GM12878 (cell line): ENCODE measurements at regions of chr13 and their contacts with region 1.

Region 1: DNA sequence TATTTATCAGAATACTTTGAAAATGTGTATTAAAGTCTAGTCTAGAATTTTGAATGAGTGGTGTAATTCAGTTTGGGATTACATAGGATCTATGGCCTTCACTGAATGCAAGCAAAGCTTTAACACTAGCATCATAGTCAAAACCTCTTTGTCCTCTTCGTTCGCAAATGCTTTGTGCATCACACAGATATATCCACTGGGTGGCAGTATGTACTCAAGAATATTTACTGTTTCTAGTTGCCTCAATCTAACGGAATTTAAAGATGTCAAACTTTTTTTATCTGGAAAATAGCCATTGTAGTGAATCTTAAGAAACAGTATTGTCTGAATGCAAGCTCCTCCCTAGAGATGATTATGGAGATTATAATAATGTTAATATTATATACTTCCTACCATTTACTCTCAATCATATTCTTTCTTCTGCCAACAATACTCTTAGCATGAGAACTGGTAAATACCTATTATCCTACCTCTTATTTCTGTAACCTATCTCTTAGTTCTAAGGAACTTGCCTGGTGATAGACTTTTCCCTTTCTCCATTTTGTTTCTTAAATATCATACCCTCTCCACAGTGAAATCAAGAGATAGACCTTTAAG is 25.8 kb downstream of the LACC1 start:
- DNase-seq: no peak
- ATAC-seq: peak; percentile 68
- H3K4me3 ChIP-seq: no peak overlapping the region
- H3K27ac ChIP-seq: no peak overlapping the region
- H3K4me1 ChIP-seq: no peaks in the 10 kb centered on the region
- H3K27me3 ChIP-seq: 0 out of 4 replicates have a peak, but pooled peaks cover 0 to 7% of the 10 kb centered on the region in 2 experiments
- CTCF ChIP-seq: peak; percentile 51 to 74 (median 65); a peak in 5 of 6 replicates
- EP300 ChIP-seq: no peak
- POLR2A ChIP-seq: no peak
- RAD21 ChIP-seq: peak; percentile 91

Region 2: GRCh38 chr13:43963726-43964125 is 58.2 kb after region 1 on chr13:
- CTCF ChIA-PET with region 1: no interaction called
- POLR2A ChIA-PET with region 1: no interaction called
- RAD21 ChIA-PET with region 1: no interaction called
- SMC1A ChIA-PET with region 1: interaction called, 3 read pairs
- in situ Hi-C with region 1: no loop called
- intact Hi-C with region 1: loop called (anchors 5 kb)
- DNase-seq: no peak
- ATAC-seq: no peak
- H3K4me3 ChIP-seq: no peak overlapping the region
- H3K27ac ChIP-seq: no peak overlapping the region
- H3K4me1 ChIP-seq: no peaks in the 10 kb centered on the region
- H3K27me3 ChIP-seq: no peaks in the 10 kb centered on the region
- CTCF ChIP-seq: peak in 2 of 3 experiments; percentile 15 to 16; a peak in 2 of 6 replicates
- EP300 ChIP-seq: no peak
- POLR2A ChIP-seq: no peak
- RAD21 ChIP-seq: no peak

Region 3: GRCh38 chr13:43981091-43981490 is 75.6 kb after region 1 on chr13:
- CTCF ChIA-PET with region 1: no interaction called
- POLR2A ChIA-PET with region 1: no interaction called
- RAD21 ChIA-PET with region 1: no interaction called
- SMC1A ChIA-PET with region 1: no interaction called
- in situ Hi-C with region 1: no loop called
- intact Hi-C with region 1: loop called (anchors 5 kb)
- DNase-seq: no peak
- ATAC-seq: no peak
- H3K4me3 ChIP-seq: no peak overlapping the region
- H3K27ac ChIP-seq: no peak overlapping the region
- H3K4me1 ChIP-seq: no peaks in the 10 kb centered on the region
- H3K27me3 ChIP-seq: no peaks in the 10 kb centered on the region; a peak in 1 of 4 replicates
- CTCF ChIP-seq: 0 out of 6 replicates have a peak, but pooled peaks have one; percentile 3 to 10 (median 4)
- EP300 ChIP-seq: no peak
- POLR2A ChIP-seq: no peak
- RAD21 ChIP-seq: peak; percentile 28; the same call in 1 of the 2 replicates

Region 4: DNA sequence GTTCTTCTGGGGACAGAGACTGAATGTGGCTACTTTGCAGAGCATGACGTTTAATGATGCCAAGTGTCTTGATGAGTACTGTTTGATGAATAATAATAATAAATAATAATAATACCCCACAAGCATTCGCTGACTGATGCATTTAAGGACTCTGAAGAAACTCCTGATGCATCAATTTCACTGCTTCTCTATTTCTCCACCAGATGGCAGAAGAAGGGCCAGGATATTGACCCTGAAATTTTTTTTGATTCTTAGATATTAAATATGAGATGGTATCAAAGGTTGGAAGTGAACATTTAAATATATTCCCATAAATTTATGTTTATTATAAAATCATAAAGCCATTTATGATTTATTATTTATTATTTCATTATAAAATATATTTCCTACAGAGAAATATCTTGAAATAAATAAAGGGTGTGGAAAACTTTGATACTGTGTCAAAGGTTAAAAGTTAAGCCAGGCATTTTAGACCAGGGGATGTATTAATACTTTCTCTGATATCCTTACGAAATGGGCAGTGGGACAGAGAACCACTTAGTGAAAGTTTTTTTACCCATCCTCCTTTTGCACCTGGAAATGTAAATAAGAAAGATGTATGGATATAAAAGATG is 145.0 kb after region 1 on chr13:
- CTCF ChIA-PET with region 1: interaction called, 10 read pairs
- POLR2A ChIA-PET with region 1: no interaction called
- RAD21 ChIA-PET with region 1: interaction called, 10 read pairs
- SMC1A ChIA-PET with region 1: interaction called, 5 read pairs
- in situ Hi-C with region 1: loop called (anchors 5 kb)
- intact Hi-C with region 1: loop called (anchors 1 kb)
- DNase-seq: no peak
- ATAC-seq: no peak
- H3K4me3 ChIP-seq: no peak overlapping the region
- H3K27ac ChIP-seq: no peak overlapping the region
- H3K4me1 ChIP-seq: no peaks in the 10 kb centered on the region
- H3K27me3 ChIP-seq: peaks cover 0 to 3% of the 10 kb centered on the region in 2 experiments; a peak in 1 of 4 replicates
- CTCF ChIP-seq: peak; percentile 41 to 49 (median 44); a peak in 5 of 6 replicates
- EP300 ChIP-seq: no peak
- POLR2A ChIP-seq: no peak
- RAD21 ChIP-seq: peak; percentile 65

Region 5: GRCh38 chr13:44435142-44435982 is 529.8 kb after region 1 on chr13:
- CTCF ChIA-PET with region 1: interaction called, 25 read pairs
- POLR2A ChIA-PET with region 1: interaction called, 3 read pairs
- RAD21 ChIA-PET with region 1: interaction called, 6 read pairs
- SMC1A ChIA-PET with region 1: interaction called, 16 read pairs
- in situ Hi-C with region 1: loop called (anchors 5 kb)
- intact Hi-C with region 1: loop called (anchors 1 kb)
- DNase-seq: peak; percentile 19
- ATAC-seq: peak; percentile 86
- H3K4me3 ChIP-seq: peak overlapping the region; percentile 45; the same call in 1 of the 2 replicates
- H3K27ac ChIP-seq: peak overlapping the region; percentile 54; the same call in 1 of the 2 replicates
- H3K4me1 ChIP-seq: peaks cover 5% of the 10 kb centered on the region
- H3K27me3 ChIP-seq: peaks cover 5 to 15% of the 10 kb centered on the region in 2 experiments
- CTCF ChIP-seq: no peak
- EP300 ChIP-seq: no peak
- POLR2A ChIP-seq: no peak; the same call in 1 of the 2 replicates
- RAD21 ChIP-seq: no peak

Region 6: DNA sequence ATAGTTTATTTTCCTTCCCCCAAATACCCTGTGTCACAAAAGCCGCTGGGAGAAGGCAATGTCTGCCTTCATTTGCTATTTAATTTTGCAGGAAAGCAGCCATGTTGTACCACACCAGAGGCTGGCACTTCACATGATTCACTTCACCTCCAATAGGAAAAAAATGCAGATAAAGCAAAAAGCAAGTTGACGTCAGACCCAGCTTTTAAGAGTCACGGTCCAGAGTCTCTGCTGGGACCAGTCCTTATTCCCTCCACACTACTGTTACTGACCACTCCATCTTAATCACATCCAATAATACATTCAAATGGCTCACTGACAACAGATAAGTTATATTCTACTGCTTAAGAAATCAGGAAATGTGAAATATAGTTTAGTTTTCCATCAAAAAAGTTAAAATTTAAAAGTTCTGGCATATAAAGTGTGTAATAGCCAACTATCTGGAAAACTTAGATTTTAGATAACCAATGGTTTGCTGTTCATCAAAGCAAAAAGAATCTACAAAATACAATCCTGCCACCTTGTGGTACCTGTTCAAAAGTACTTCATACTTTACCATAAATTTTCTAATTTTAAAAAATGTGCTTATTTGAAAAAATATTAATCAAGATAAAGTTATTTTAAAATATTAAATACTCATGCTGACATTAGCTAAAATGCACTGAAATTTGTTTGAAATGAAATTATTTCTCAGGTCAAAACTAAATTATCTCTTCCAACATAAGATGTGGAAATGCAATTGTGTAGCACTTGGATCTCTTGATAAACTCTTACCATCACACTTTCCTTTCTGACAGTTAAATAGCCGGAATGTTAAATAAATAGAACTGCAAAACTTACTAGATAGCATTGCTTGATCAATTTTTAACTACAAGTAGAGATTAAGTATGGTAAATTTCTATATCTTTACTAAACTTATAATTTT is 565.4 kb after region 1 on chr13:
- CTCF ChIA-PET with region 1: interaction called, 15 read pairs
- POLR2A ChIA-PET with region 1: no interaction called
- RAD21 ChIA-PET with region 1: interaction called, 3 read pairs
- SMC1A ChIA-PET with region 1: interaction called, 5 read pairs
- in situ Hi-C with region 1: loop called (anchors 10 kb)
- intact Hi-C with region 1: loop called (anchors 1 kb)
- DNase-seq: no peak
- ATAC-seq: no peak
- H3K4me3 ChIP-seq: no peak overlapping the region
- H3K27ac ChIP-seq: no peak overlapping the region
- H3K4me1 ChIP-seq: no peaks in the 10 kb centered on the region
- H3K27me3 ChIP-seq: no peaks in the 10 kb centered on the region
- CTCF ChIP-seq: peak; percentile 11 to 41 (median 34); a peak in 2 of 6 replicates
- EP300 ChIP-seq: no peak
- POLR2A ChIP-seq: no peak
- RAD21 ChIP-seq: peak; percentile 53